ENCODE measurements at regions of chr1 and their contacts with region 1.

Region 1: DNA sequence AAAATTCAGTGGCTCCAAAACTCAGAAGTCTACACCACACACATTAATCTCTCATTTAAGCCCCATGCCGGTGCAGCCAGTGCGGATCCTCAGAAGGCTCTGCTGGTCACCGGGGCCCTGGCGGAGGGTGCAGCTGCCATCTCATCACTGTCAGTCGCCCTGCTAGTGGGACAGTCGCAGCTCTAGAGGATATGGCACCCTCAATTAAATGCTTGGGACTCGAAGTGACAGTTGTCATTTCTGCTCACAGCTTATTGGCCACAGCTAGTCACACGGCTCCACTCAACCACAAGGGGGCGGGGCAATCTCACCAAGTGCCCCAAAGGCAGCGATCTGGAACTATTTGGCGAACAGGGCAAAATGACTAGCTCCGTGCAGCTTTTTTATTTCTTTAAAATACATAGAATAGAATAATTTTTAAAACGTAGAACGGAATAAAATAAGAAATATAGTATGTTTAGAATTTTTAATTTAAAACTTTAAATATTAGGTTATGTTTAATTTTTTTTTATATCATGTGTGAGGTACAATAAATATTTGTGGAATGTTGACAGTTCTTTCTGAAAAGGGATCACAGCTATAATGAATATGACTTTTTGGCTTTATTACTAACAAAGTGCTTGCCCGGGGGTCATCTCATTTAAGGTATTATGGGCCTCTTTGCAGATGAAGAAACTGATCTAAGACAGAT is 8.0 kb upstream of the MAN1C1 start:
- DNase-seq: no peak
- H3K4me3 ChIP-seq: no peak overlapping the region
- H3K27ac ChIP-seq: no peak overlapping the region
- H3K4me1 ChIP-seq: no peaks in the 10 kb centered on the region
- H3K27me3 ChIP-seq: no peaks in the 10 kb centered on the region
- CTCF ChIP-seq: peak; percentile 87 to 95 (median 87)
- POLR2A ChIP-seq: no peak

Region 2: GRCh38 chr1:25562101-25562927 is 46.3 kb before region 1 on chr1:
- intact Hi-C with region 1: no loop called
- DNase-seq: no peak
- H3K4me3 ChIP-seq: no peak overlapping the region
- H3K27ac ChIP-seq: peak overlapping the region; percentile 40
- H3K4me1 ChIP-seq: peaks cover 56% of the 10 kb centered on the region
- H3K27me3 ChIP-seq: no peaks in the 10 kb centered on the region
- CTCF ChIP-seq: no peak
- POLR2A ChIP-seq: no peak

Region 3: GRCh38 chr1:25796811-25797458 is 188.3 kb after region 1 on chr1:
- intact Hi-C with region 1: loop called (anchors 5 kb)
- DNase-seq: no peak
- H3K4me3 ChIP-seq: no peak overlapping the region
- H3K27ac ChIP-seq: peak overlapping the region; percentile 25
- H3K4me1 ChIP-seq: peaks cover 43% of the 10 kb centered on the region
- H3K27me3 ChIP-seq: no peaks in the 10 kb centered on the region
- CTCF ChIP-seq: peak; percentile 56 to 80 (median 62)
- POLR2A ChIP-seq: no peak